Right ventricle myocardium inferior (tissue), 1 donor: ENCODE measurements at regions of chr13 and their contacts with region 1.

Region 1: GRCh38 chr13:110108347-110109174 is 198.4 kb downstream of the COL4A1 start:
- DNase-seq: peak; percentile 89
- ATAC-seq: peak; percentile 92

Region 2: DNA sequence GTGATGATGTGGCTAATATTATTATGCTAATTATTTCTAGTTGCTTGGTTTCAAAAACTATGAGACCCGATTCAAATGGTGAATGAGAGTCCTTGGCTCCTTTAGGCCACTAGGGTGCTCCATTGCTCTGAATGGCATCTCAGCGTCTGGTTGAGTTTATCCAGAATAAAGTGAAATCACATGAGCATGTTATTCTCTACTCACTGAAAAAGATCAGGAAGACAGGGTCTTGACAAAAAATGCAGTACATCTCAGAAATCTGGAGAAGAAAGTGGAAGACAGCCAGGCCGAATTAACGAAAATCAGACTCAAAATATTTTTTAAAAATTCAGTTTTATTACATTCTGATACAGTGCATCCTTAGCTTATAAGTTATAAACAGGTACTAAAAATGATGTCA is 962.9 kb before region 1 on chr13:
- intact Hi-C with region 1: loop called (anchors 10 kb)
- DNase-seq: no peak
- ATAC-seq: peak; percentile 76

Region 3: DNA sequence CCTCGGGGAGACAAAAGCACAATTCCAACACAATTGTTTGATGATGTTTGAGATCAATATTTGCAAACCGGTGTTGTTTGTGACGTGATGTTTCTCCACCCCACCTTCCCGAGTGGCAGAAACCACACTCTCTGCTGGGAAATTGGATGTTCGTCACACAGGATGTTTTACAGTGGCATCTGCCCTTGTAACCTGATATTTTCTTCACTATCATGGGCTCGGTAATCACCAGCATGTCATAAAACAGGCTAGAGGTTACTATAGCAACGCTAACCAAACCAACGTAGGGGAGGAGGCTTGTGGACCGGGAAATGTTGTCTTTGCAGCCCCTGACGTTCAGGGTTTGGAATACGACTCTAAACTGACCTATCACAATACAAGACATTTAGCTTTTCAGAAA is 776.7 kb before region 1 on chr13:
- intact Hi-C with region 1: loop called (anchors 10 kb)
- DNase-seq: no peak
- ATAC-seq: no peak

Region 4: GRCh38 chr13:109786457-109787134 is 322.0 kb before region 1 on chr13 and contains the start of gene IRS2:
- intact Hi-C with region 1: loop called (anchors 5 kb)
- DNase-seq: peak; percentile 96
- ATAC-seq: peak; percentile 86
- total RNA-seq, gene IRS2: 9.7 TPM

Region 5: DNA sequence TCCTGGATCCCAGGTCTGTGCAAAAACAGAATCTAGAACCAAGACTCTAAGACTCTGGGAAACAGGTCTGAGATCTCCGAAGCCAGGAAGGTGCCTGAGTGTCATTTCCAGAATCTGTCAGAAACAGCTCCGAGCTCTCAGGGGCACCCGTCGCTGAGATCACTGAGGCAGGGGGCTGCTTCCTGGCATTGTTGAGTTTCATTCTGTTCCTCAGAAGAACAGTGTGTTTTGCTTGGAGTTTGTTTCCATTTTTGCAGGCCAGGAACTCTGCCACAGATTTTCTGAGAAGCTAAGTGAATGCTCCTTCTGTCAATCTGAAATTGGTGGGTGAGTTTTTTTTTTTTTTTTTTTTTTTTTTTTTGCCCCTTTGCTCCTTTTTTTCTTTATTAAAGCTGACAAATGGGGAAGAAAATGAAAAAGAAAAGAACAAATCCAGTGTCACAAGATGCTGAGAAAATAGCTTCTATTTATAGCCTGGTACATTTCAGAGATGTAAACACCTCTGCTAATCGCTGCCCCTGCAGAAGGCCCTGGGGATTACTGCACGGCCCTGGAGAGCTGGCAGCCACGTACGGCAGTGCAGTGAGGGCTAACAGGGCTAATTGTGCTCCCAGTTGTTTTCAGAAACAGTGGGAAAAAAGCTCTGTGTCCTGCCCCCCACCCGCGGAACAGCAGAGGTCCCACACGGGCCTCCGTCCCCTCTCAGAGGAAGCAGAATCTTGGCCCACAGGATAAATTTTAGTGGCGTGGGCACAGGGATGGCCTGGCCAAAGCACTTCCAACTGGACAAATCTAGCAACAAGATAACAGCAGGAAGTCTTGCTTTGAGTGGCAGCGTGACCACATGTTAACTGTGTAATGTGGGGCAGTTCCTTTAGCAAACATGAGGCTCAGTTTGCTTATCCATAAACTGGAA is 84.6 kb before region 1 on chr13:
- intact Hi-C with region 1: loop called (anchors 5 kb)
- DNase-seq: no peak
- ATAC-seq: peak; percentile 91

Region 6: DNA sequence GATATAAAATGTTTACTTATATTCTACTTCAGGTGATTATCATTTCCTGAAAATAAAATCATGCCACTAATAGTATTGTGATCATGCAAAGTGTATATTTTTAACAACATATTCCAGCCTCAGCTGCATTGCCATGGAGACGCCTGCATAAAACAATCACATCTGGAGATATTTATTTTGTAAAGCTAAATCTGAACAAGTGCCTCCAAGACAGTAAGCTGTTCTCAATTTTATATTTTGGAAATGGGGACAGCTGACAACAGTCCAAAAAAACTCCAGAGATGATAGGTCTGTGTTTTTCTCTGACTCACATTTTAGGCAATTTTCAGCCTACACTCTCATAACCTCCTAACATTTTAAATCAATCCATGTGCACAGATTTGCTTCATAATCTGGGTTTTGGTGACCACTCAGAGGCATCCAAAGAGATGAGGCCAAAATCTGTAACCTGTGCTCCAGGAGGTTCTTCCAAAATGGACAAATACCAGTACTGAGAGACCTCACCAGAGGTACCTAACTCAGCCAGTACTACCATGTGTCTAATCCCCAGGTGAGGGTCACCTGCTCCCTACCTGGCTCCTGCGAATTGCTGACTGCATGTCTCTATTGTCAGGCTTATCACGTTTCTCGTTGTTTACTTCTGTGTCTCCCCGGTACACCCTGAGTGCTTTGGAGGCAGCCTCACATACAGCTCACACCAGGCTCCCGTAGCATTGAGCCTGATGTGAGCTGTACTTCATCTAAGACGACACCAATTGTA is 135.7 kb after region 1 on chr13:
- intact Hi-C with region 1: no loop called
- DNase-seq: no peak
- ATAC-seq: peak; percentile 11